Spleen (tissue), 13 donors: ENCODE measurements at regions of chr17 and their contacts with region 1.

Region 1: DNA sequence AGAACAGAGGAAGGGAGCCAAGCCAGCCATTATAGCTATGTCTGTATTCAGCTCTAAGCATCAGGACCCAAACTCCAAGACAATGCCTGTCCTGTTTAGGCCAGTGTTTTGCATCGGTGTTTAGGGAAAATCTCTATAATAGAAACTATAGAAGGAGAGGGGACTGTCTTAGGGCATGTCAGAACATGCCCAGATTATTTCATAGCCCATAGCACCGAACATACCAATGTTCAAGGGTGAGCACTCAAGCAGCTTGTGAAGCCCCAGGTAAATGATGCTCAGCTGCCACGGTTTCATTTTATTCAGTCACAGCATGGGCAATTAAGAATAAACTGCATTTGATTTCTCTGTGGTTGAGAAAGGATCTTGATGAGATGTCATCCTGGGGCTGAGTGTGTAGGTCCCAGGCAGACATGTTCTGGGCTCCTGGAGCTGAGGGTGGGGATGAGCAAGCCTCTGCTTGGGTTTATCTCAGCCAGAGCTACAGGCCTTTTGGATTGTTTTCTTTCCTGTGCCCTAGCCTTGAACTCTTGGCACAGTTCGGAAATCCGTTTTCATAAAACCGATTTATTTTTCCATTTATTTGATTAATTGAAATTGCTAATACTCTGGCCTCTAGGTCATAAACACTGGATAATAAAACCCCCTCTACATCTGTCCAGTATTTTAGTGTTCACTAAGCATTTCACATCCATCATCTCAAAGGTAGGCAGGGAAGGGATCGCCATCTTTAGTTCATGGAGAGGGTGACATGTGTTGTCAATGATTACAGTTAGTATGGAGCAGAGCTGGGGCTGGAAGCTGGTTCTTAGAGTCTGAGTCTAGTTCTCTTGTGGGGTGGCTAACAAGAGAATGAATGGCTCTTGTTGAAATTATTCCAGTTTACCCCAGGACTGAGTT is 290.7 kb upstream of the ASIC2 start:
- DNase-seq: no peak
- H3K4me3 ChIP-seq: no peak overlapping the region
- H3K27ac ChIP-seq: no peak overlapping the region
- H3K4me1 ChIP-seq: no peaks in the 10 kb centered on the region
- H3K27me3 ChIP-seq: peaks cover 0 to 6% (median 0%) of the 10 kb centered on the region in 7 donors
- CTCF ChIP-seq: no peak
- POLR2A ChIP-seq: no peak

Region 2: GRCh38 chr17:33451221-33451620 is 132.5 kb before region 1 on chr17:
- intact Hi-C with region 1: no loop called
- DNase-seq: no peak
- H3K4me3 ChIP-seq: no peak overlapping the region
- H3K27ac ChIP-seq: no peak overlapping the region
- H3K4me1 ChIP-seq: no peaks in the 10 kb centered on the region
- H3K27me3 ChIP-seq: peaks cover 0 to 6% (median 0%) of the 10 kb centered on the region in 7 donors
- CTCF ChIP-seq: no peak
- POLR2A ChIP-seq: no peak

Region 3: DNA sequence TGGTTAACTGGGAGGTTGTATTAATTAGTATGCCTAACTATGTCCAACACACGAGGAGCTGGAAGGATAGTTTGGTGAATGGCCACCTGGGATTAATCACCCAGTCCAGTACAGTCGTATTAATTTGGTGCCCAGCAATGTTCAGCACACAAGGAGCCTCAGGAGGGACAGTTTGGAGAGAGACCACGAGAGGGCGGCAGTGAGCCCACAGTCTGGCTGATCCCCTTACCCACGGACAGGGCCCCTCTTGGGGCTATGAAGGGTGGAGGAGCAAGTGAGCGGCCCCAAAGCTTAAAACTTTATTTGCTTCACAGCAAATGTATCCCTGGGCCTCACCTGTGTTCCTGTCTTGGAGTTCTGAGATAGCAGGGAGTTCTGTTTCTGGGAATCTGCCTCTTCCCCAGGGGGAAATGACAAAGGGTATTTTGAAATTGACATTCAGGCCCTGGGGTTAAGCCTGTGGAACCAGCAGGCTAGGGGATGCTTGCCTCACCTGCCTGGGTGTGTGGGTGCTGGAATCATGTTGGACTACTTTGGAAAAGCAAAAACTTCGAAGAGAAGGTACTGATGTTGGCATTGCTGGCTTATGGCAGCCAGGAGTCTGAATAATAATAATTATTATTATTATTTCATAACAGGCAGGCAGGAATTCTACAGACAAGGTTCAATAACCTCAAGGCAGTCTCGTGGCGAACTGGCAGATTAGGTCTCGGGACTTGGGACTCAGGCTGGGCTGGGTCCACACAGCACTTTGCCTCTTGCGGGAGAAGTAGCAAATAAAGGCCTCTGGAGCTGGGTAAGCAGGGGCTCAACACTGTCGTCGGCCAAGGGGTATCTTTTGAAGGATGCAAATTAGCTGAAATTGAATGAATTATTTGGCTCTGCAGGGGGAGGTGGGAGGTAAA is 63.1 kb before region 1 on chr17:
- intact Hi-C with region 1: loop called (anchors 10 kb)
- DNase-seq: no peak
- H3K4me3 ChIP-seq: no peak overlapping the region
- H3K27ac ChIP-seq: no peak overlapping the region
- H3K4me1 ChIP-seq: no peaks in the 10 kb centered on the region
- H3K27me3 ChIP-seq: peaks cover 0 to 16% (median 0%) of the 10 kb centered on the region in 7 donors
- CTCF ChIP-seq: peak; percentile 8 to 71 (median 47)
- POLR2A ChIP-seq: no peak

Region 4: GRCh38 chr17:33667052-33667509 is 83.3 kb after region 1 on chr17:
- intact Hi-C with region 1: no loop called
- DNase-seq: no peak
- H3K4me3 ChIP-seq: peak overlapping the region in 1 of 8 donors; percentile 14
- H3K27ac ChIP-seq: no peak overlapping the region
- H3K4me1 ChIP-seq: peaks cover 0 to 6% (median 0%) of the 10 kb centered on the region in 6 donors
- H3K27me3 ChIP-seq: peaks cover 0 to 21% (median 0%) of the 10 kb centered on the region in 7 donors
- CTCF ChIP-seq: no peak
- POLR2A ChIP-seq: no peak